ENCODE measurements at regions of chr5 and their contacts with region 1.

Region 1: GRCh38 chr5:5523066-5523505 is 100.6 kb downstream of the ICE1 start:
- DNase-seq: peak in 3 of 9 experiments; percentile 13 to 85 (median 74)
- ATAC-seq: peak; percentile 77
- H3K4me3 ChIP-seq: peak overlapping the region in 1 of 2 experiments; percentile 27
- H3K4me3 Mint-ChIP-seq: peak overlapping the region; percentile 78
- H3K27ac ChIP-seq: peak overlapping the region in 1 of 2 experiments; percentile 25
- H3K27ac Mint-ChIP-seq: peak overlapping the region; percentile 22
- H3K4me1 ChIP-seq: peaks cover 7% of the 10 kb centered on the region
- H3K4me1 Mint-ChIP-seq: peaks cover 12% of the 10 kb centered on the region
- H3K27me3 ChIP-seq: no peaks in the 10 kb centered on the region
- H3K27me3 Mint-ChIP-seq: peaks cover 2% of the 10 kb centered on the region
- CTCF ChIP-seq: no peak

Region 2: DNA sequence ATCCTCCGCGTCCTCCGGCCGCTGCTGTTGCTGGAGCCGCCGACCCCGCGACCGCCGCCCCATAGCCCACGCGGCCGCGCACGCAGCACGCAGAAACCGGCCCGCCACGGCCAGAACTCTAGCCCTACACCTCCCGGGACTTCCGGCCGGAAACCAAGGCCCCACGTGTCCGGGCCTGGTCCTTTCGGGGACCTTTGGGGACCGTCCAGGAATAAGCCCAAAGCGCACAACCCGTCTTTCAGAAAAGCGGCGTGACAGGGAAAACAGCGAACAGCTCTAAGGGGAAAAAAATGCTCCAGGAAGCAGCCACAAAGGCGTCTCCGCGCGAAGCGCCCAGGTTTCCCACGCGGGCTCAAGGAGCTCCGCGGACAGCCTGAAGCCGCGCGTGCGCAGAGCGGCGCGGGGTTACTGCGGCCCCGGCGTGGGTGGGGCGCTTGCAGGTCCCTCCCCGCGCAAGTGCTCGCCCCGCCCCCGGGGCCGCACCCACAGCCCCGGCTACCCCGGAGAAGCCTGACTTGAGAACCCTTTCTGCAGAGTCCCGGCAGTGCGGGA is 1109.9 kb after region 1 on chr5 and contains the starts of genes NSUN2 and SRD5A1:
- CTCF ChIA-PET with region 1: no interaction called
- POLR2A ChIA-PET with region 1: no interaction called
- intact Hi-C with region 1: loop called in 1 of 2 experiments (anchors 2 kb)
- DNase-seq: peak; percentile 81 to 98 (median 90)
- ATAC-seq: peak; percentile 89
- H3K4me3 ChIP-seq: peak within 1 kb of the TSS; percentile 75 to 83
- H3K4me3 Mint-ChIP-seq: peak within 1 kb of the TSS; percentile 85
- H3K27ac ChIP-seq: peak within 1 kb of the TSS; percentile 92 to 100
- H3K27ac Mint-ChIP-seq: peak within 1 kb of the TSS; percentile 99
- H3K4me1 ChIP-seq: peaks cover 22% of the 10 kb centered on the region
- H3K4me1 Mint-ChIP-seq: peaks cover 52% of the 10 kb centered on the region
- H3K27me3 ChIP-seq: no peaks in the 10 kb centered on the region
- H3K27me3 Mint-ChIP-seq: no peaks in the 10 kb centered on the region
- CTCF ChIP-seq: no peak
- total RNA-seq, gene NSUN2: 69.6 to 74.3 TPM
- total RNA-seq, gene SRD5A1: 2.1 to 2.8 TPM

Measured in CD8-positive, alpha-beta T cell (primary cell).